ENCODE measurements at regions of chr2 and their contacts with region 1.

Region 1: GRCh38 chr2:79041032-79041448 is 15.5 kb downstream of the REG3G start:
- DNase-seq: peak; percentile 22 to 48 (median 26)
- ATAC-seq: peak; percentile 94
- H3K4me3 ChIP-seq: no peak overlapping the region
- H3K27ac ChIP-seq: peak overlapping the region in 3 of 4 donors; percentile 22 to 71 (median 55)
- H3K4me1 ChIP-seq: peaks cover 36% of the 10 kb centered on the region
- H3K27me3 ChIP-seq: no peaks in the 10 kb centered on the region
- CTCF ChIP-seq: peak; percentile 20 to 81 (median 78)
- POLR2A ChIP-seq: no peak

Region 2: GRCh38 chr2:79100285-79100684 is 59.2 kb after region 1 on chr2:
- intact Hi-C with region 1: loop called (anchors 5 kb)
- DNase-seq: no peak
- ATAC-seq: peak; percentile 34
- H3K4me3 ChIP-seq: no peak overlapping the region
- H3K27ac ChIP-seq: peak overlapping the region in 2 of 4 donors; percentile 44 to 77
- H3K4me1 ChIP-seq: peaks cover 39% of the 10 kb centered on the region
- H3K27me3 ChIP-seq: no peaks in the 10 kb centered on the region
- CTCF ChIP-seq: no peak
- POLR2A ChIP-seq: no peak

Measured in body of pancreas (tissue), 4 donors.